ENCODE measurements at regions of chr5 and their contacts with region 1.

Region 1: DNA sequence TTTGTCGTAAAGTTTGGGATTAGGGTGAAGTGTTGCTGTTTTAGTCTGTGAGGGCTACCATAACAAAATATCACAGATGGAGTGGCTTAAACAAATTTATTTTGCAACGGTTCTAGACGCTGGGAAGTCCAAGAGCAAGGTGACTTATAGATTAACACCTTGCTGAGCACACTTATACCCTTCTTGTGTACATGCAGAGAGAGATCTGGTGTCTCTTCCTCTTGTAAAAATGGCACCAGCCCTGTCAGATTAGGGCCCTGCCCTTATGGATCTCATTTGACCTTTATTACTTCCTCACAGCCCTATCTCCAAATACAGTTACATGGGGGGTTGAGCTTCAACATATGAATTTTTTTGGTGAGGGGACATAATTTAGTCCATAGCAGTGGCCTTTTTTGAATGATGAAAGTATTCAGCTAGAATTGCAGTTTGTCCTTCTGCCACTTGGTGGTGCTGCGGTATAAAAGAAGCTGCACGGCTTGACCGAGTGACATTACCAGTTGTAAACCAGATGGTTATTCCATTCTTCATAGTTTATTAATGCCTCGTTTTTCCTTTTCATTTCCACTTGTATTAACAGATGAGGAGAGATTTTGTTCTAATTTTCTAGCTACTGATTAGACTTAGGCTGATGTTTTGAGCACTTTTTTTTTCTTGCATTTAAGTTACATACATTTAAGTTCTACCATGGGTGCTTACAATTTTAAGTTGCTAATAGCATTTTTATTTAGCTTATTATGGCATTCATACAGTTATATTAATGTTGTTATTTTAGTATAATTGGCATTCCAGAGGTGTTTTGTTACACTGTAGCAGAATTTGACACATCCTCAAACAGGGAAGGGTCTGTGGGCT is 19.4 kb downstream of the DCP2 start:
- DNase-seq: peak; percentile 64 to 85 (median 78)
- ATAC-seq: peak; percentile 94
- H3K4me3 ChIP-seq: no peak overlapping the region
- H3K4me3 Mint-ChIP-seq: no peak overlapping the region
- H3K27ac ChIP-seq: no peak overlapping the region
- H3K27ac Mint-ChIP-seq: no peak overlapping the region
- H3K4me1 ChIP-seq: no peaks in the 10 kb centered on the region
- H3K4me1 Mint-ChIP-seq: peaks cover 32% of the 10 kb centered on the region
- H3K27me3 ChIP-seq: no peaks in the 10 kb centered on the region
- H3K27me3 Mint-ChIP-seq: no peaks in the 10 kb centered on the region
- CTCF ChIP-seq: peak; percentile 99

Region 2: DNA sequence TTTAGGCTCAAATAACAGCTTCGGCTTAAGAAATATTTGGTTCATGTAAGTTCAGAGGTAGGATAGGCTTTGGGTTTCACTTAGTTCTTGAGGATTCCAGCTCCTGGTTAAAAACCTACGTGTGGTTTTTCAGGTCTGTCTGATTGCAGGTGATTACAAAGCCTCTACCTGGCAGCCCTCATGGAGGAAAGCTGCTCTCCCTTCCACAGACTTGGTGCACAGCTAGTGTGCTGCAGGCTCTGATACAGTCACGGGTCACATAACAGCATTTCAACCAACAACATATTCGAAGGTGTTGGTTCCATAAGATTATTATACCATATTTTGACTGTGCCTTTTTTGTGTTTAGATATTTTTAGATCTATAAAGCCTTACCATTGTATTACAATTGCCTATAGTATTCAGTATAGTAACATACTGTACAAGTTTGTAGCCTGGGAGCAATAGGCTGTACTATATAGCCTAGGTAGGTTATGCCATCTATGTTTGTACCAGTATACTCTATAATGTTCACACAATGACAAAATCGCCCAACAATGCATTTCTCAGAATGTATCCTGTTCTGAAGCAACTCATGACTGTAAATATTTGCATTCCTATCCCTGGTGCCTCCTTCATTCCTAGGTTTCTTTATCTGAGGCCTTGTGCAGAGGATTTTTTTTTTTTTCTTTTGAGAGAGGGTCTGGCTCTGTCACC is 27.4 kb before region 1 on chr5:
- CTCF ChIA-PET with region 1: interaction called, 11 read pairs
- POLR2A ChIA-PET with region 1: no interaction called
- intact Hi-C with region 1: no loop called
- DNase-seq: no peak
- ATAC-seq: no peak
- H3K4me3 ChIP-seq: no peak overlapping the region
- H3K4me3 Mint-ChIP-seq: no peak overlapping the region
- H3K27ac ChIP-seq: no peak overlapping the region
- H3K27ac Mint-ChIP-seq: no peak overlapping the region
- H3K4me1 ChIP-seq: peaks cover 5% of the 10 kb centered on the region
- H3K4me1 Mint-ChIP-seq: peaks cover 6% of the 10 kb centered on the region
- H3K27me3 ChIP-seq: no peaks in the 10 kb centered on the region
- H3K27me3 Mint-ChIP-seq: no peaks in the 10 kb centered on the region
- CTCF ChIP-seq: no peak

Region 3: DNA sequence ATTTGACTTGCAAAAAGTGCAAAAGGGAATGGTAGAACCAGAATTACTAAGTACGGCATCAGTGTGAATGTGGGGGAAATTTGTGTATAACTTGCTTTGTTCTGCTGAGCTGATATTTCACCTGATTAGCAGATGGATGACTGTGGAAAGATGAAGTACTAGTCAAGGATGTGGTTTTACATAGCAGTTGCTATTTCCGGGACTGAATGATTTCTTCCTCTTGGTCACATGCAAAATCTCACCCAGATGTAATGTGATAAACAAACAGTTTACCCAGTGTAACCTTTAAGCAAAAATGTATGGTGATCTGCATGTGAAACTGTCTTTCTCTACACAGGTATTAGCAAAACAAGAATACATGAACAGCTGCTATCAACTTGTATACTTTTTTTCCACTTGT is 26.7 kb after region 1 on chr5:
- CTCF ChIA-PET with region 1: interaction called, 21 read pairs
- POLR2A ChIA-PET with region 1: no interaction called
- intact Hi-C with region 1: no loop called
- DNase-seq: peak in 2 of 9 experiments; percentile 69 to 84
- ATAC-seq: peak; percentile 89
- H3K4me3 ChIP-seq: no peak overlapping the region
- H3K4me3 Mint-ChIP-seq: peak overlapping the region; percentile 23
- H3K27ac ChIP-seq: peak overlapping the region; percentile 24 to 68
- H3K27ac Mint-ChIP-seq: peak overlapping the region; percentile 78
- H3K4me1 ChIP-seq: peaks cover 42% of the 10 kb centered on the region
- H3K4me1 Mint-ChIP-seq: peaks cover 71% of the 10 kb centered on the region
- H3K27me3 ChIP-seq: no peaks in the 10 kb centered on the region
- H3K27me3 Mint-ChIP-seq: no peaks in the 10 kb centered on the region
- CTCF ChIP-seq: no peak

Region 4: GRCh38 chr5:113059232-113060040 is 63.4 kb after region 1 on chr5:
- CTCF ChIA-PET with region 1: interaction called, 16 read pairs
- POLR2A ChIA-PET with region 1: no interaction called
- intact Hi-C with region 1: no loop called
- DNase-seq: peak in 1 of 9 experiments; percentile 42
- ATAC-seq: no peak
- H3K4me3 ChIP-seq: no peak overlapping the region
- H3K4me3 Mint-ChIP-seq: peak overlapping the region; percentile 33
- H3K27ac ChIP-seq: no peak overlapping the region
- H3K27ac Mint-ChIP-seq: peak overlapping the region; percentile 78
- H3K4me1 ChIP-seq: peaks cover 48% of the 10 kb centered on the region
- H3K4me1 Mint-ChIP-seq: peaks cover 70% of the 10 kb centered on the region
- H3K27me3 ChIP-seq: no peaks in the 10 kb centered on the region
- H3K27me3 Mint-ChIP-seq: no peaks in the 10 kb centered on the region
- CTCF ChIP-seq: no peak

Region 5: DNA sequence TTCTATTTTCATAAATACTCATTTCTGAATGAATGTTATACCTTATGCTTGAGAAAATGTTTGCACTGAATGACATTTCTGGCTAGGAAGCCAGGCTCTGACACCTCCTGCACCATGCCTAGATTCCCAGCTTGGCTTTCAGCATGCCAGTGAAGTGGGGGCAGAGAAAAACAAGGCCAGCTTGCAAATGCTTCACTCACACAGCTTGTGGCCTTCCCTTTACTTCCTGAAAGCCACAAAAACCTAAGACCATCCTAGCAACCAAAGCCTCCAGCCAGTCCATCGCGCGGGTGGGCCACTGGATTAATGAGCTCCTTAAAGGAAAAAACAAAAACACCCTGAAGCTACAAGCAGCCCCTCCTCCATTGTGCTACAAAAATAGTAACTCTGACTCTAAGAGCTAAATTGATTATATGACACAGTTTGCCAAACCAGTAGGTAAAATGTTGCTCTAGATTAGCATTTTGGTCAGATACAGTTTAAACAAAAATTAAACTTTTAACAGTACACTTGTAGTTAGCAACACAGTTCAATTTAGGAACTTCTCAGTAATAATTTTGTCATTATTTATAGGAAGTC is 278.9 kb after region 1 on chr5:
- CTCF ChIA-PET with region 1: interaction called, 13 read pairs
- POLR2A ChIA-PET with region 1: no interaction called
- intact Hi-C with region 1: no loop called
- DNase-seq: no peak
- ATAC-seq: no peak
- H3K4me3 ChIP-seq: no peak overlapping the region
- H3K4me3 Mint-ChIP-seq: no peak overlapping the region
- H3K27ac ChIP-seq: no peak overlapping the region
- H3K27ac Mint-ChIP-seq: peak overlapping the region; percentile 25
- H3K4me1 ChIP-seq: peaks cover 7% of the 10 kb centered on the region
- H3K4me1 Mint-ChIP-seq: peaks cover 23% of the 10 kb centered on the region
- H3K27me3 ChIP-seq: no peaks in the 10 kb centered on the region
- H3K27me3 Mint-ChIP-seq: no peaks in the 10 kb centered on the region
- CTCF ChIP-seq: no peak

Region 6: DNA sequence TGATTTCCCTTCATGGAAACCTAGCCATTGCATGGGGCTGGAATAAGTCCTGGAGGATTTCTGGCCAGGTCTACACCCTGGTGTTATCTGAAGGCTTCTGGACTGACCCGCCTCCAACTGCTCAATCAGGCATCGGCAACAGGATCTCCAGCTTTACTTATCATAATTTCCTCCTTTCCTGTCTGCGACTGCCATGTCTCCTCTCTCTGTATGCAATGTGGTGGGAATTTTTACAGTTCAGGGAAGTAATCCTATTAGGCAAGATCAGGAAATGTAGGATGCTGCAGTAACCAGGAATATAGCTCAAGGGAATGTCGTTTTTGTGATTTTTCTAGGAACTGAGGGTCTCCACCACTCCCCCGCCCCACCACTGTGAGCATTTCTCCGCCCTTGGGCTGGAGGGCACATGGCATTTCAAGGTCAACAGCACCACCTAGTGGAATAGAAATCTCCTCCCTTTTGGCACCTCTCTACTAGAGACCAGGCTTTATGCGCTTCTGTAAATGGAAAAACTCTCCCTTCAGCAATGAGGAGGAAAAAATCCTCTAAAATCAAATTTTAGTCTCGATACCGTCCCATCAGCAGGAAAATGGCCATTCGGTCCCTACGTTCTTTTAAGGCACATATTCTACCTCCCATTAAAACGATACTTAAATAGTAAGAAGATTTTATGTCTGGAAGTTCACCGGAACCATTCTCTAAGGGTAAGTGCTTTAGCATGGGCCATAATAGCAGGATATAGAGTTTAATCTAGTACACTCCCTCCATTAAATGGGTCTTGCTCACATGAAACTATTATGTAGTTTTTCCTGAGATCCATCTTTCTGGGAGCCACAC is 610.5 kb after region 1 on chr5:
- CTCF ChIA-PET with region 1: interaction called, 46 read pairs
- POLR2A ChIA-PET with region 1: no interaction called
- intact Hi-C with region 1: loop called (anchors 1 kb)
- DNase-seq: peak in 8 of 9 experiments; percentile 10 to 73 (median 42)
- ATAC-seq: peak; percentile 74
- H3K4me3 ChIP-seq: no peak overlapping the region
- H3K4me3 Mint-ChIP-seq: no peak overlapping the region
- H3K27ac ChIP-seq: no peak overlapping the region
- H3K27ac Mint-ChIP-seq: no peak overlapping the region
- H3K4me1 ChIP-seq: no peaks in the 10 kb centered on the region
- H3K4me1 Mint-ChIP-seq: peaks cover 4% of the 10 kb centered on the region
- H3K27me3 ChIP-seq: peaks cover 0 to 5% of the 10 kb centered on the region in 2 experiments
- H3K27me3 Mint-ChIP-seq: peaks cover 22% of the 10 kb centered on the region
- CTCF ChIP-seq: peak; percentile 75

Measured in CD8-positive, alpha-beta T cell (primary cell).